RWPE1 (cell line): ENCODE measurements at regions of chr2 and their contacts with region 1.

Region 1: DNA sequence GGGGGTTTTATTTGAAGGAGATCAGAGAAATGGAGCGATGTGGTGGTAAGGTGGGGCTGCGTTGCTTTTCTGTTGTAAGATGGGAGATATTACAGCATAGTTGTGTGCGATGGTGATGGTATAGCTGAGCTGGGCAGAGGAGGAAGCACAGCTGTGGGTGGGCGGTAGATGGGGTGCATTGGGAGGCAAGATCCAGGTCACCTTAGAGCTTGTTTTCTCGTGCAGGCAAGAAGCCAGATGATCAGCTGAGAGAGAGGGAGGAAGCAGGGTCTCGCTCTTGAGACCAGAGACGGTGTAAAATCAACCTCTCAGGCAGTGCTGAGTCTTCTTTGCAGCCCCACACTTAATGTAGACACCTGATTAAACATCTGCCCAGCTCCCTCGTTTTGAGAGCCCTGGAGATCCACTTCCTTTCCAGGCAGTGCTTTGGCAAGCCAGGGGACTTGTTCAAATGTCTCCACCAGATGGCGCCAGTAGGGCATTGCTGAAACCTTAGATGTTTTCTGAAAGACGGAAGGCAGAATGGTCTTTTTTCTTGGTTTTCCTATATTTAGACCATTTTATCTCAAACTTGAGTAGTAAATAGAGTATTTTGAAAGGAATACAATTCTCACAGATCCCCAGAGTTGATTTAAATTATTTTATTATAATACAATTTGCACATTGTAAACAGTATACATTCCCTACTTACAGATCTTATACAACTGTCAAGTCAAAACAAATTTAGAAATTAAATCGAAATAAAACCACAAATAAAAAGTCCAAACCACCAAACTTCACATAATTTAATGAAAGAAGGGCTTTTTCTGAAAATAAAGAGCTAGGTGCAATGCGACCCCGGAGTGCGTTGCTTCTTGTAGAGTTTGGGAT is 21.1 kb upstream of the LYPD6B start:
- DNase-seq: peak; percentile 63
- H3K27ac ChIP-seq: no peak overlapping the region
- CTCF ChIP-seq: peak; percentile 86

Region 2: DNA sequence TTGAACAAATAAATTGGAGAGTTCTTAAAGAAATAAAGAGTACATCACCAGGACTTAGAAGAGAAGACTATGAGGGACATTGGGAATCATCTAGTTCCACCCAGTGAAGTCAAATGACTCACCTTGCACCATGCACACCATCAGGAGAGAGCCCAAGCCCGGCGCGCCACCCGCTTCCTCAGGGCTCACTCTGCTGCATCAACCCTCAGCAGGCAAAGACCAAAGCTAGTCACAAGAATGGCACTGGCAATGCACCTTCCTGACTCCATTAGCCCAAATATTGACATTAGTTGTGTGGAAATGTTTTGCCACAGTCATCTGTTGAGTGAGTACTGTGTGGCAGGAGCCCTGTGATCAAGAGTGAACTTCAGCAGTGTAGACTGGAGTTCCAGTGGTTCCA is 14.0 kb after region 1 on chr2:
- CTCF ChIA-PET with region 1: interaction called, 10 read pairs
- POLR2A ChIA-PET with region 1: interaction called, 4 read pairs
- DNase-seq: no peak
- H3K27ac ChIP-seq: no peak overlapping the region
- CTCF ChIP-seq: no peak

Region 3: DNA sequence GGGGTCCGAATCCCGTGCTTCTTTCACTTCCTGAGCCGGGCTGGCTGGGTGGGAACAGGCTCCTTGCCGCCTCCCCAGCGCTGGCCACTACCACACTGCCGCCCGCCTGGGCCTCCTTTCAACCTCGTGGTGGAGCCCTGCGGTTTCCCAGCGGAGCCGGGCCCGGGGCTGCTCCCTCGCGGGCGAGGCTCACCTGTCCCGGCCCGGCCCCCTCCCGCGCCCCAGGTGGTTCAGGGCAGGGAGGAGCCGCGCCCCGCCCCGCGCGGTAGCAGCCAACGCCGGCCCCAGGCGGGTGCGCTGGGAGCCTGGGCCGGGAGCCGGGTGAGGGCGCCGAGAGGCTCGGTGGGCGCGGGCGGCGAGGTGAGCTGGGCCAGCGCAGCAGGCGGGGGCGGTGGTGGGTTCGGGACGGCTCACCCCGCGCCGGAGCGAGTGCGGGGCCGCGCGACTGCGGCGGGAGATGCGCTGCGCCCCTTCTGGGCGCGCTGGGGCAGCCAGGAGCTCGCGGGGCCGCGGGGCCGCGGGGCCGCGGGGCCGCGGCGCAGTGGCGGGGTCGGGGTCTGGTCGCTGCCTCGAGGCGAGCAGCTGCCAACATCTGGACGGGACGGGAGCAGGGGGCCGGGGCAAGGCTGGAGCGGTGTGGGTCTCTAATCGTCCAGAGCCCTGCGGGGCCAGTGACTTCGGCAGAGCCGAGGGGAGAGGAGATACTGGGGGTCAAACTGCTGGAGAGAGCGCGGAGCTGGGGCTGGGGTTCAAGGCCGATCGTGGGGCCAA is 21.3 kb after region 1 on chr2 and contains the start of gene LYPD6B:
- CTCF ChIA-PET with region 1: interaction called, 11 read pairs
- POLR2A ChIA-PET with region 1: no interaction called
- DNase-seq: peak; percentile 64
- H3K27ac ChIP-seq: no peak within 1 kb of the TSS
- CTCF ChIP-seq: peak; percentile 21

Region 4: GRCh38 chr2:149169655-149170555 is 152.6 kb after region 1 on chr2:
- CTCF ChIA-PET with region 1: no interaction called
- POLR2A ChIA-PET with region 1: no interaction called
- DNase-seq: peak; percentile 86
- H3K27ac ChIP-seq: no peak overlapping the region
- CTCF ChIP-seq: no peak

Region 5: GRCh38 chr2:149561309-149561926 is 544.1 kb after region 1 on chr2:
- CTCF ChIA-PET with region 1: interaction called, 29 read pairs
- POLR2A ChIA-PET with region 1: no interaction called
- DNase-seq: no peak
- H3K27ac ChIP-seq: no peak overlapping the region
- CTCF ChIP-seq: peak; percentile 91